Panc1 (cell line): ENCODE measurements at regions of chr10 and their contacts with region 1.

Region 1: GRCh38 chr10:72692057-72692910 is at the start of gene MCU:
- DNase-seq: no peak
- ATAC-seq: peak; percentile 99
- H3K4me3 ChIP-seq: peak within 1 kb of the TSS; percentile 75 to 77
- H3K27ac ChIP-seq: peak within 1 kb of the TSS; percentile 73
- H3K4me1 ChIP-seq: peaks cover 18% of the 10 kb centered on the region
- H3K27me3 ChIP-seq: no peaks in the 10 kb centered on the region
- CTCF ChIP-seq: no peak
- total RNA-seq, gene MCU: 31.6 TPM

Region 2: GRCh38 chr10:72126184-72126871 is 566.0 kb before region 1 on chr10:
- CTCF ChIA-PET with region 1: no interaction called
- POLR2A ChIA-PET with region 1: interaction called, 13 read pairs
- in situ Hi-C with region 1: no loop called
- intact Hi-C with region 1: no loop called
- DNase-seq: no peak
- ATAC-seq: no peak; the same call in 1 of the 2 replicates
- H3K4me3 ChIP-seq: no peak overlapping the region
- H3K27ac ChIP-seq: peak overlapping the region; percentile 63
- H3K4me1 ChIP-seq: peaks cover 43% of the 10 kb centered on the region
- H3K27me3 ChIP-seq: no peaks in the 10 kb centered on the region
- CTCF ChIP-seq: peak; percentile 66

Region 3: DNA sequence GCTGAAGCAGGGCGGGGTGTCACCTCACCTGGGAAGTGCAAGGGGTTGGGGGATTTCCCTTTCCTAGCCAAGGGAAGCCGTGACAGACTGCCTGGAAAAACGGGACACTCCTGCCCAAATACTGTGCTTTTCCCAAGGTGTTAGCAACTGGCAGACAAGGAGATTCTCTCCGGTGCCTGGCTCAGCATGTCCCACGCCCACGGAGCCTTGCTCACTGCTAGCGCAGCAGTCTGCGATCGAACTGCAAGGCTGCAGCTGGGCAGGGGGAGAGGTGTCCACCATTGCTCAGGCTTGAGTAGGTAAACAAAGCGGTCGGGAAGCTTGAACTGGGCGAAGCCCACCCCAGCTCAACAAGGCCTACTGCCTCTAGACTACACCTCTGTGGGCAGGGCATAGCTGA is 256.7 kb before region 1 on chr10:
- CTCF ChIA-PET with region 1: interaction called, 13 read pairs
- POLR2A ChIA-PET with region 1: no interaction called
- in situ Hi-C with region 1: no loop called
- intact Hi-C with region 1: no loop called
- DNase-seq: no peak
- ATAC-seq: no peak
- H3K4me3 ChIP-seq: no peak overlapping the region
- H3K27ac ChIP-seq: no peak overlapping the region
- H3K4me1 ChIP-seq: no peaks in the 10 kb centered on the region
- H3K27me3 ChIP-seq: no peaks in the 10 kb centered on the region
- CTCF ChIP-seq: no peak

Region 4: GRCh38 chr10:72673280-72673679 is 19.0 kb before region 1 on chr10:
- CTCF ChIA-PET with region 1: no interaction called
- POLR2A ChIA-PET with region 1: no interaction called
- in situ Hi-C with region 1: no loop called
- intact Hi-C with region 1: no loop called
- DNase-seq: no peak
- ATAC-seq: no peak
- H3K4me3 ChIP-seq: no peak overlapping the region
- H3K27ac ChIP-seq: no peak overlapping the region
- H3K4me1 ChIP-seq: no peaks in the 10 kb centered on the region
- H3K27me3 ChIP-seq: peaks cover 3% of the 10 kb centered on the region; the same call in 1 of the 2 replicates
- CTCF ChIP-seq: no peak

Region 5: DNA sequence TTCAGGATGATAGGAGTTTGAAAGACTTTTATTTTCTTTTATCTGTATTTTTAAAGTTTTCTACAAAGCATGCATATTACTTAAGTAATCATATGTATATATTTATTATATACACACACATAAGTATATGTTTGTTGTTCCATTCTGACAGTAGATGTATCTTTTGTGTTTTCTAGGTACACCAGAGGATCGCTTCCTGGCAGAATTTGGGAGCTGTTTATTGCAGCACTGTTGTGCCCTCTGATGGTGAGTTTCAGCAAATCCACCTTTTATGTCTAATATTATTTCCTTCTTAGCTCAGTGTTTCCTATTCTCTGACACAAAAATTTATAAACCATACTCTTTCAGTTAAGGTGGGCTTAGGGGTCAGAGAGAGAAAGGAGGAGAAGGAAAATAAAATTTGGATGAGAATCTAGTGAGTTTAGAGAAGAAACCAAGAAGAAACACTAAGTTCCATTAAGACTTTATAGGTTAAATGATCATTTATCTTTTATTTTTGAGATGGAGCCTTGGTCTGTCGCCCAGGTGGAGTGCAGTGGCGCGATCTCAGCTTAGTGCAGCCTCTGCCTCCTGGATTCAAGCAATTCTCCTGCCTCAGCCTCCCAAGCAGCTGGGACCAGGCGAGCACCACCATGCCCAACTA is 142.0 kb after region 1 on chr10:
- CTCF ChIA-PET with region 1: interaction called, 14 read pairs
- POLR2A ChIA-PET with region 1: no interaction called
- in situ Hi-C with region 1: no loop called
- intact Hi-C with region 1: loop called (anchors 2 kb)
- DNase-seq: peak; percentile 42
- ATAC-seq: peak; percentile 91
- H3K4me3 ChIP-seq: no peak overlapping the region
- H3K27ac ChIP-seq: no peak overlapping the region
- H3K4me1 ChIP-seq: 0 out of 2 replicates have a peak, but pooled peaks cover 8% of the 10 kb centered on the region
- H3K27me3 ChIP-seq: no peaks in the 10 kb centered on the region
- CTCF ChIP-seq: peak; percentile 78; the same call in 1 of the 2 replicates